GM12878 (cell line): ENCODE measurements at regions of chr20 and their contacts with region 1.

Region 1: DNA sequence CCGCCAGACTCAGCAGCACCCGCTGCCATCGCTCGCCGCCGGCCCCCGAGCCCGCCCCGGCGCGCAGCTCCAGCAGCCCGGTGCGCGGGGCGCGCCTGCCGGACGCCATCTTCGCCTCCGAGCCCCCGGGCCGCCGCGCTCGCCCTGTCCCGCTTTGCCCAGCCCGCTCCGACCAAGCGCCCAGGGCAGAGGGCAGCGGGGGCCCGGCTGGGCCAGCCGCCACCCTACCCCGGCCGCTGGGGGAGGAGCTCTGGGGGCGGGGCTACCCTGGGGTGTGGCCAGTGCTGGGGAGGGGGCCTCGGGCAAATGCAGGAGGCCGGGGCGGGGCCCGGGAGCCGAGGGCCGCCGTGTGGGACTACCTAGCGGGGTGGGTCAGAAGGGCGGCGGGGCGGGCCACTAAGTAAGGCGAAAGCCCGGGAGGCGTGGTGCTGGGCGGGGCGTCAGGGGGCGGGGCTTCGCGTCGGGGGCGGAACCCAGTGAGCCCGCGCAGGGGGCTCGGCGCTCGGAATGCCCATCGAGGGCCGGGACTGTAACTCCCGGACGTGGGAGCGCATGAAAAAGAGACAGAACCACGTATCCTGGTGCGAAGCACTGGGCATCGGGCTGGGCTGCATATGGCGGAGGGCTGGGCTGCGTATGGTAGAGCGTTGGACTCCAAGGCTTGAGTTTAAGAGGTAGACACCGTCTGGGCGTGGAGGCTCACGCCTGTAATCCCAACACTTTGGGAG is at the start of gene SNTA1:
- DNase-seq: no peak
- ATAC-seq: peak; percentile 93
- H3K4me3 ChIP-seq: peak within 1 kb of the TSS; percentile 77
- H3K27ac ChIP-seq: no peak within 1 kb of the TSS
- H3K4me1 ChIP-seq: peaks cover 21% of the 10 kb centered on the region
- H3K27me3 ChIP-seq: no peaks in the 10 kb centered on the region; a peak in 1 of 4 replicates
- CTCF ChIP-seq: no peak
- EP300 ChIP-seq: no peak
- POLR2A ChIP-seq: no peak; the same call in 1 of the 2 replicates
- RAD21 ChIP-seq: no peak
- polyA plus RNA-seq, gene SNTA1: 0.26 to 0.35 TPM

Region 2: GRCh38 chr20:32945710-32946221 is 497.9 kb before region 1 on chr20:
- CTCF ChIA-PET with region 1: no interaction called
- POLR2A ChIA-PET with region 1: no interaction called
- RAD21 ChIA-PET with region 1: no interaction called
- SMC1A ChIA-PET with region 1: no interaction called
- in situ Hi-C with region 1: no loop called
- intact Hi-C with region 1: no loop called
- DNase-seq: no peak
- ATAC-seq: peak; percentile 82
- H3K4me3 ChIP-seq: no peak overlapping the region
- H3K27ac ChIP-seq: no peak overlapping the region
- H3K4me1 ChIP-seq: no peaks in the 10 kb centered on the region
- H3K27me3 ChIP-seq: no peaks in the 10 kb centered on the region
- CTCF ChIP-seq: peak; percentile 41 to 61 (median 46)
- EP300 ChIP-seq: no peak
- POLR2A ChIP-seq: no peak
- RAD21 ChIP-seq: peak; percentile 19; the same call in 1 of the 2 replicates

Region 3: GRCh38 chr20:33501000-33501399 is 57.3 kb after region 1 on chr20:
- CTCF ChIA-PET with region 1: no interaction called
- POLR2A ChIA-PET with region 1: interaction called, 10 read pairs
- RAD21 ChIA-PET with region 1: no interaction called
- SMC1A ChIA-PET with region 1: no interaction called
- in situ Hi-C with region 1: no loop called
- intact Hi-C with region 1: no loop called
- DNase-seq: no peak
- ATAC-seq: no peak
- H3K4me3 ChIP-seq: no peak overlapping the region
- H3K27ac ChIP-seq: no peak overlapping the region
- H3K4me1 ChIP-seq: peaks cover 5% of the 10 kb centered on the region
- H3K27me3 ChIP-seq: no peaks in the 10 kb centered on the region
- CTCF ChIP-seq: no peak
- EP300 ChIP-seq: no peak
- POLR2A ChIP-seq: no peak
- RAD21 ChIP-seq: no peak

Region 4: DNA sequence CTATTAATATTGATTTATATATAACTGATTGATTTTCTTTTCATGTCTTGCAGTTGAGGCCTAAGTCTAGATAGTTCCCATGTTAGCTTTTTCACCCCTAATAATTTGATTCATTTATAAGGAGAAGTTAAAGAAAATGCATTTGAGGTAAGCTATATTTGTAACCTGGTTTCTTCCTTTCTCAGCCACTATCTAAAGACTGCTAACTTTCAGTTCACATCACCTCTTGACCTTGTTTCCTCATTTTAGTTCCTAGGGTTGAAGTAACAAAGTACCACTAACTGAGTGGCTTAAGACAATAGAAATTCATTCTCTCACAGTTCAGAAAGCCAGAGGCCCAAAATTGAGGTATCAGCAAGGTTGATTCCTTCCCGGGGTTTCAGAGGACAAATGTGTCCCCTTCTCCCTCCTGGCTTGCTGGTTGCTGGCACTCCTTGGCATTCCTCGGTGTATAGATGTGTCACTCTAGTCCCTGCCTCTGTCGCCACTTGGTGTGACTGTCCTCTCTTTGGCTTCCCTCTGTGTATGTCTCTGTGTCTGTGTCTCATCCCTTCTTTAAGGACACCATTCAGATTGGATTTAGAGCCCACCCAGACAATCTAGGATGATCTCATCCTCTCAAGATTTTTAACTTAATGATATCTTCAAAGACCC is 162.6 kb after region 1 on chr20:
- CTCF ChIA-PET with region 1: no interaction called
- POLR2A ChIA-PET with region 1: no interaction called
- RAD21 ChIA-PET with region 1: no interaction called
- SMC1A ChIA-PET with region 1: no interaction called
- in situ Hi-C with region 1: no loop called
- intact Hi-C with region 1: no loop called
- DNase-seq: peak; percentile 51
- ATAC-seq: peak; percentile 88
- H3K4me3 ChIP-seq: peak overlapping the region; percentile 6; the same call in 1 of the 2 replicates
- H3K27ac ChIP-seq: peak overlapping the region; percentile 16
- H3K4me1 ChIP-seq: peaks cover 45% of the 10 kb centered on the region
- H3K27me3 ChIP-seq: no peaks in the 10 kb centered on the region
- CTCF ChIP-seq: no peak
- EP300 ChIP-seq: no peak
- POLR2A ChIP-seq: no peak
- RAD21 ChIP-seq: no peak